IMR-90 (cell line): ENCODE measurements at regions of chr7 and their contacts with region 1.

Region 1: GRCh38 chr7:102912742-102913141 is at the start of gene LRRC17:
- DNase-seq: peak; percentile 97
- ATAC-seq: peak; percentile 63
- H3K4me3 ChIP-seq: peak within 1 kb of the TSS; percentile 93
- H3K27ac ChIP-seq: peak within 1 kb of the TSS; percentile 88
- H3K4me1 ChIP-seq: peaks cover 7% of the 10 kb centered on the region
- H3K27me3 ChIP-seq: no peaks in the 10 kb centered on the region
- CTCF ChIP-seq: no peak
- POLR2A ChIP-seq: peak; percentile 95
- RAD21 ChIP-seq: peak; percentile 40
- total RNA-seq, gene LRRC17: 271 and 280 TPM in 2 replicates

Region 2: DNA sequence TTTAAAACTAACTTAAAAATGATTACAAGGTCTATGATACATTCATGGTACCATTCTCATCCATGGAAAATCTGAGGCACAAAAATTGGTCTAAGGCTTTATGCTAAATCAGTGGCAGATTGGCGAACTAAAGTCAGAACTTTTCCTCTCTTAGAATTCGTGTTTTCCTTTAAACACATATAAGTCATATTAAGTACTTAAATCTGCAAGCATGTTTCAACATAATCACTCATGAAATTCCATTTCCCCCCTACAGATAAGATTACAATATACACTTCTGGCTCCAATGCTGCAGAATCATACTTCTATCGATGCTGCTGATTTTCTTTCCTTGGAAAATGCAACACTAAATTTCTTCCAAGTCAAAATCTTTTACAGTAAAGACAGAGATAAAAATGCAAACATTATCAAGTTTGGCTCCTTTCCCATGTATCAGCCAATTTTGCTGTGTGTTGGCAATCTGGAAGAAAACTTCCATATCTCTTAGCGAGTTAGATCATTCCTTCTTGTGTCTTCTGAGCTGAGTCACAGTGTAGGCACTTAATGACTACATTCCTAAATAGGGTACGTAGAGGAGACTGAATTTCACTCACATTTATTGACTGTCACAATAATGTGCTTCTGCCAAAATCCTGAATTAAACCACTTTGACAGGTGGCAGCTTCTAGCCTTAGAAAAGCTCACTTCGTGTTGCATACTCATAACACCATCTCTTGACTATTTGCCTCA is 76.4 kb before region 1 on chr7:
- CTCF ChIA-PET with region 1: no interaction called
- POLR2A ChIA-PET with region 1: no interaction called
- dilution Hi-C with region 1: no loop called
- in situ Hi-C with region 1: no loop called
- intact Hi-C with region 1: loop called (anchors 2 kb)
- DNase-seq: peak; percentile 95
- ATAC-seq: peak; percentile 89
- H3K4me3 ChIP-seq: no peak overlapping the region
- H3K27ac ChIP-seq: peak overlapping the region; percentile 22; the same call in 1 of the 2 replicates
- H3K4me1 ChIP-seq: peaks cover 12% of the 10 kb centered on the region
- H3K27me3 ChIP-seq: no peaks in the 10 kb centered on the region
- CTCF ChIP-seq: no peak
- POLR2A ChIP-seq: no peak
- RAD21 ChIP-seq: peak; percentile 14; the same call in 1 of the 2 replicates

Region 3: DNA sequence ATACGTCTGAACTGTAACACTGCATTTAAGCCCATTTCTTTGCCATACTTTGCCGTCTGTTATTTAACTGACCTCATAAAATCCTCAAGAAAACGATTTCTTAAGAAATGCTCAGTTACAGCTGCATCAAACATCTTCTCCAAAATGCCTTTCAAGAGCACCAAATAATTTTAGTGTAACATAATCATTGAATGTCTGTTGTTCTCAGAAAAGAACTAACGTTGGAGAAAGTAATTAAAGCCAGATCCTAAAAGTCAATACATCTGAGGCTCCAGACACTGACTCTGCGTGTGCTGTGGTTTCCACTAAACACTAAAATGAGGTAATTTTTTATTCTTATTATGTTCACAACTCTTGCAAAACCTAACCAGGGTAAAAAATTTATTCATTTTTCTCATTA is 63.7 kb before region 1 on chr7:
- CTCF ChIA-PET with region 1: no interaction called
- POLR2A ChIA-PET with region 1: interaction called, 14 read pairs
- dilution Hi-C with region 1: no loop called
- in situ Hi-C with region 1: no loop called
- intact Hi-C with region 1: no loop called
- DNase-seq: no peak
- ATAC-seq: no peak
- H3K4me3 ChIP-seq: no peak overlapping the region
- H3K27ac ChIP-seq: no peak overlapping the region
- H3K4me1 ChIP-seq: peaks cover 4% of the 10 kb centered on the region; the same call in 1 of the 2 replicates
- H3K27me3 ChIP-seq: no peaks in the 10 kb centered on the region
- CTCF ChIP-seq: no peak
- POLR2A ChIP-seq: no peak
- RAD21 ChIP-seq: no peak

Region 4: DNA sequence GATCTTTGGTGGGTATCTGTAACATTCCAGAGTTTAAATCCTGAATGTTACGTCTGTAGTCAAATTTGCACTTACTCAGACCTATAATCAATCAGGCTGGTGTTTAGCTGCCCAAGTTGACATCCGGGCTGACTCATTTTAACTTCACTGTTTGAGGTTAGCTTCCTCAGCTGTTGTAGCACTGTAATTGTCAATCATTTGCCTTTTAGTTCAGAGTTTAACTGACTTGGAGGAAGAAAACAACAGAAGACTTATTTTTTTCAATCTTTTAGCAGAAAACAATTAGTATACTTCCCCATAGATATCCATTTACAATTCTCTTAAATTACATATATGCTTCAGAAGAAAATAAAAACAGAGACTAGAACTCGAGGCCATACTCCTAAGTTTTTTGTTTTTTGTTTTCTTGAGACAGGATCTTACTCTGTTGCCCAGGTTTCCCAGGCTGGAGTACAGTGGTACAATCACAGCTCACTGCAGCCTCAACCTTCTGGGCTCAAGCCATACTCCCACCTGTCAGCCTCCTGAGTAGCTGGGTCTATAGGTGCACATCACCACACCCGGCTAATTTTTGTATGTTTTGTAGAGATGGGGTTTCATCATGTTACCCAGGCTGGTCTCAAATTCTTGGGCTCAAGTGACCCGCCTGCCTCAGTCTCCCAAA is 38.4 kb before region 1 on chr7:
- CTCF ChIA-PET with region 1: interaction called, 4 read pairs
- POLR2A ChIA-PET with region 1: interaction called, 5 read pairs
- dilution Hi-C with region 1: no loop called
- in situ Hi-C with region 1: no loop called
- intact Hi-C with region 1: loop called (anchors 5 kb)
- DNase-seq: peak; percentile 94
- ATAC-seq: peak; percentile 27
- H3K4me3 ChIP-seq: no peak overlapping the region
- H3K27ac ChIP-seq: peak overlapping the region; percentile 80
- H3K4me1 ChIP-seq: peaks cover 28% of the 10 kb centered on the region
- H3K27me3 ChIP-seq: no peaks in the 10 kb centered on the region
- CTCF ChIP-seq: no peak
- POLR2A ChIP-seq: no peak; the same call in 1 of the 2 replicates
- RAD21 ChIP-seq: no peak; the same call in 1 of the 2 replicates

Region 5: GRCh38 chr7:102925976-102926782 is 13.4 kb after region 1 on chr7:
- CTCF ChIA-PET with region 1: interaction called, 14 read pairs
- POLR2A ChIA-PET with region 1: no interaction called
- dilution Hi-C with region 1: no loop called
- in situ Hi-C with region 1: no loop called
- intact Hi-C with region 1: no loop called
- DNase-seq: peak; percentile 39
- ATAC-seq: peak; percentile 16
- H3K4me3 ChIP-seq: no peak overlapping the region
- H3K27ac ChIP-seq: peak overlapping the region; percentile 80; the same call in 1 of the 2 replicates
- H3K4me1 ChIP-seq: peaks cover 16% of the 10 kb centered on the region
- H3K27me3 ChIP-seq: no peaks in the 10 kb centered on the region
- CTCF ChIP-seq: no peak
- POLR2A ChIP-seq: no peak
- RAD21 ChIP-seq: no peak

Region 6: GRCh38 chr7:103065667-103066066 is 152.9 kb after region 1 on chr7:
- CTCF ChIA-PET with region 1: interaction called, 5 read pairs
- POLR2A ChIA-PET with region 1: no interaction called
- dilution Hi-C with region 1: no loop called
- in situ Hi-C with region 1: no loop called
- intact Hi-C with region 1: loop called (anchors 1 kb)
- DNase-seq: peak; percentile 30
- ATAC-seq: peak; percentile 74
- H3K4me3 ChIP-seq: no peak overlapping the region
- H3K27ac ChIP-seq: no peak overlapping the region
- H3K4me1 ChIP-seq: no peaks in the 10 kb centered on the region
- H3K27me3 ChIP-seq: no peaks in the 10 kb centered on the region
- CTCF ChIP-seq: peak; percentile 51
- POLR2A ChIP-seq: no peak
- RAD21 ChIP-seq: peak; percentile 48